CD8-positive, alpha-beta T cell (primary cell): ENCODE measurements at regions of chr11 and their contacts with region 1.

Region 1: GRCh38 chr11:59171508-59172322 is at the start of gene DTX4:
- DNase-seq: peak; percentile 78 to 92 (median 89)
- ATAC-seq: peak; percentile 86
- H3K4me3 ChIP-seq: peak within 1 kb of the TSS; percentile 72 to 85
- H3K4me3 Mint-ChIP-seq: peak within 1 kb of the TSS; percentile 87
- H3K27ac ChIP-seq: peak within 1 kb of the TSS in 1 of 2 experiments; percentile 33
- H3K27ac Mint-ChIP-seq: no peak within 1 kb of the TSS
- H3K4me1 ChIP-seq: peaks cover 9% of the 10 kb centered on the region
- H3K4me1 Mint-ChIP-seq: peaks cover 11% of the 10 kb centered on the region
- H3K27me3 ChIP-seq: peaks cover 0 to 5% of the 10 kb centered on the region in 2 experiments
- H3K27me3 Mint-ChIP-seq: peaks cover 6% of the 10 kb centered on the region
- CTCF ChIP-seq: peak; percentile 95
- total RNA-seq, gene DTX4: 0.68 to 0.97 TPM

Region 2: DNA sequence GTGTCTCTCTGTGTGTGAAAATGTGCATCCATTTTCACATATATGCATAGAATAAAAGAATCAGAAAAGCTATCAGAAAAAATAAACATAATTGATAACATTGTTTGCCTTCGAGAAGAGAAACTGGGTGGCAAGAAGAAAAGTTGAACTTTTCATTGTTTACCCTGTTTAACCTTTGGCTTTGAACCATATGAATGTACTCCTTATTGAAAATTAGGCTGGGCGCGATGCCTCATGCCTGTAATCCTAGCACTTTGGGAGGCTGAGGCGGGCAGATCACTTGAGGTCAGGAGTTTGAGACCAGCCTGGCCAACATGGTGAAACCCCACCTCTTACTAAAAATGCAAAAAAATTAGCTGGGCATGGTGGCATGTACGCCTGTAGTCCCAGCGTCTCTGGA is 1159.9 kb before region 1 on chr11:
- CTCF ChIA-PET with region 1: no interaction called
- POLR2A ChIA-PET with region 1: no interaction called
- intact Hi-C with region 1: no loop called
- DNase-seq: no peak
- ATAC-seq: no peak
- H3K4me3 ChIP-seq: no peak overlapping the region
- H3K4me3 Mint-ChIP-seq: no peak overlapping the region
- H3K27ac ChIP-seq: no peak overlapping the region
- H3K27ac Mint-ChIP-seq: no peak overlapping the region
- H3K4me1 ChIP-seq: no peaks in the 10 kb centered on the region
- H3K4me1 Mint-ChIP-seq: no peaks in the 10 kb centered on the region
- H3K27me3 ChIP-seq: no peaks in the 10 kb centered on the region
- H3K27me3 Mint-ChIP-seq: peaks cover 10% of the 10 kb centered on the region
- CTCF ChIP-seq: no peak

Region 3: GRCh38 chr11:59076876-59077571 is 94.7 kb before region 1 on chr11:
- CTCF ChIA-PET with region 1: no interaction called
- POLR2A ChIA-PET with region 1: no interaction called
- intact Hi-C with region 1: no loop called
- DNase-seq: no peak
- ATAC-seq: no peak
- H3K4me3 ChIP-seq: no peak overlapping the region
- H3K4me3 Mint-ChIP-seq: no peak overlapping the region
- H3K27ac ChIP-seq: no peak overlapping the region
- H3K27ac Mint-ChIP-seq: no peak overlapping the region
- H3K4me1 ChIP-seq: peaks cover 4% of the 10 kb centered on the region
- H3K4me1 Mint-ChIP-seq: peaks cover 8% of the 10 kb centered on the region
- H3K27me3 ChIP-seq: peaks cover 0 to 2% of the 10 kb centered on the region in 2 experiments
- H3K27me3 Mint-ChIP-seq: peaks cover 23% of the 10 kb centered on the region
- CTCF ChIP-seq: no peak

Region 4: DNA sequence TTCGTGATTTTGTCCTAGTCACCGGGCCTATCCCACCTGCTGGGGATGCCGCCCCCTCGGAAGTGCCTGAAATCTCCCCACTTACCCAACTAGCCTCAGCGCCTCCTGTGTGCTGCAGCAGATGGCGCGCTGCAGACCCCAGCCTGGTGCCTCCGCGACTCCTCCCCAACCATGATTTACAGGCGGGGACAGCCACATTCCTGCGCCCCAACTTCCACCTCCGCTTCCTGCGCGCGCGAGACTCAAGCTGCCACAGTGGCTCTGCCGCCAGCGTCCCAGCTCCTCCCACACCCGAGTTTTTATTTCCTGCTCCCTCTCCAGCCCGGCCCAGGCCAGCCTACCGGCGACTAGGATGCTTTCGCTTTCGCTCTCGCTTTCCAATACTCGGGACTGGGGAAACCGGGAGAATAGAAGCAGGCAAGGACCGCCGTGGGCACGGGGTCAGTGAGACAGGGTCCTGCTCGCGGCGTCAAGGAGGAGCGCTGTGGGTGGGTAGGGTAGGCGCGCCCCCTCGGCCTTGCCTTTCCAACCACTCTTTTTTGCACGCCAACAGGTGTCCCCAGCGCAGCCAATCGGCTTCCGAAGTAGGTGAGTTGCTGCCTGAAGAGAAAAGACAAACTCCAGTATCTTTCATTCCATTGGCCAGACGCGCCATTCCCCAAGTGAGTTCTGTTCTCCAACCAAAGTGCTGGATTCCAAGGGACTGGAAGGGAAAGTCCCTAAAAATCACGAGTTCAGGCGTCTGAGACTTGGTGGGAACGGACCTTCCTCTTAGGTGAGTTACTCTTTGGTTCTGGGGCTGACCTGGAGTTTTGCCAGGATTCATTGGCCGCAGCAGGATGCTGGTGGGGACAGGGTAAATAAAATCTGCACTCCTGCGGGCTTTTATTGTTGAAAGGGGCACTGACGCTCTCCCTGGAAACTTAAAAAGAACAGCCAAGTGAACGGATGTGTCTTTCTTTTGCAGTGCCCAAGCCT is 28.9 kb before region 1 on chr11 and contains the start of gene FAM111A:
- CTCF ChIA-PET with region 1: interaction called, 13 read pairs
- POLR2A ChIA-PET with region 1: interaction called, 4 read pairs
- intact Hi-C with region 1: loop called (anchors 1 to 2 kb)
- DNase-seq: peak; percentile 58 to 95 (median 87)
- ATAC-seq: peak; percentile 83
- H3K4me3 ChIP-seq: peak within 1 kb of the TSS; percentile 84 to 95
- H3K4me3 Mint-ChIP-seq: peak within 1 kb of the TSS; percentile 98
- H3K27ac ChIP-seq: peak within 1 kb of the TSS; percentile 81 to 95
- H3K27ac Mint-ChIP-seq: peak within 1 kb of the TSS; percentile 97
- H3K4me1 ChIP-seq: peaks cover 31% of the 10 kb centered on the region
- H3K4me1 Mint-ChIP-seq: peaks cover 54% of the 10 kb centered on the region
- H3K27me3 ChIP-seq: no peaks in the 10 kb centered on the region
- H3K27me3 Mint-ChIP-seq: no peaks in the 10 kb centered on the region
- CTCF ChIP-seq: peak; percentile 45
- total RNA-seq, gene FAM111A: 23.3 to 33.4 TPM

Region 5: GRCh38 chr11:59191890-59192289 is 20.2 kb after region 1 on chr11:
- CTCF ChIA-PET with region 1: interaction called, 102 read pairs
- POLR2A ChIA-PET with region 1: interaction called, 4 read pairs
- intact Hi-C with region 1: no loop called
- DNase-seq: no peak
- ATAC-seq: no peak
- H3K4me3 ChIP-seq: no peak overlapping the region
- H3K4me3 Mint-ChIP-seq: no peak overlapping the region
- H3K27ac ChIP-seq: no peak overlapping the region
- H3K27ac Mint-ChIP-seq: no peak overlapping the region
- H3K4me1 ChIP-seq: no peaks in the 10 kb centered on the region
- H3K4me1 Mint-ChIP-seq: peaks cover 2% of the 10 kb centered on the region
- H3K27me3 ChIP-seq: no peaks in the 10 kb centered on the region
- H3K27me3 Mint-ChIP-seq: peaks cover 3% of the 10 kb centered on the region
- CTCF ChIP-seq: no peak

Region 6: DNA sequence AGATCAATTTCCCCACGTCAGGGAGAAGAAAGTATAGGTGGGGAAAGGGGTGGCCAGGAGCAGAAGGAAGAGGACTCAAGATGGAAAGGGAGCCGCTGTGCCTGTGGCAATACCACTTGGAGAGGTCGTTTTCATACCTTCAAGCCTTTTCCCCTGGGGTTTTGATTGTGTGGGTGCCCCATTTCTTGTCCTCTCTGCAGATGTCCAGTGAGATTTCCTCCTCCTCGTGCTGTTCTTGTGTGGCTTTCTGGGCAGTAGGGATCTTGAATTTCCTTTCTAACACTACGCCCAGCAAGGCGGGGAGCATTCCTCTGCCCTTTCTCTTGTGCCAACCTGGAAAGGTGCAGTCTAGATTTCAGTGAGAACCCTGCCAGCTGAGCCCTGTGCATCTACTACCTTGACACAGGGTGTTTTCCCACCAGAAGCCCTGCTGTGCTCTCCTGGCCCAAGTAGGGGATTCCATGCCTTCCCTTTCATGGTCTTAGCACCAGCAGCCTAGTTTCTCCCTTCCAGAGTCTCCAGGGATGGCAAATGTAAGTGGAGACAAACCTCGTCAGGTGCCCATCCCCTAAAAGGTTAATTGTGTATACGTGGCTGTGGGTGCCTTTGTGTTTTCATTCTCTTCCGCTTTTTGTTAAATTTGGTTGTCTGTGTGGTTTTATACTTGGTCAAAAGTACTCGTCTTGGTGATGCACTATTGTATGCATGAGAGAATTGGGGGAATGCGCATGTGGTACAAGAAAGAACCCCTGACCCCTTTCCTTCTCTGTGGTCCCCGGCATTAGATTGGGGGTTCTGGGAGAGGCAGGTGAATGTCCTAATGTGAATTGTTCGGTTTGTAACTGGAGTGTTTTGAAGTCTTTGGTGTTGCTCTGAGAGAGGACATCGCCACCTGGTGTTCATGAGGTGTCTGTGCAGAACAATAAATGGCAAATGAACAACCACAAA is 112.4 kb after region 1 on chr11:
- CTCF ChIA-PET with region 1: interaction called, 5 read pairs
- POLR2A ChIA-PET with region 1: no interaction called
- intact Hi-C with region 1: loop called (anchors 1 kb)
- DNase-seq: peak in 8 of 9 experiments; percentile 26 to 78 (median 42)
- ATAC-seq: peak; percentile 87
- H3K4me3 ChIP-seq: no peak overlapping the region
- H3K4me3 Mint-ChIP-seq: peak overlapping the region; percentile 75
- H3K27ac ChIP-seq: no peak overlapping the region
- H3K27ac Mint-ChIP-seq: peak overlapping the region; percentile 15
- H3K4me1 ChIP-seq: peaks cover 14% of the 10 kb centered on the region
- H3K4me1 Mint-ChIP-seq: peaks cover 17% of the 10 kb centered on the region
- H3K27me3 ChIP-seq: no peaks in the 10 kb centered on the region
- H3K27me3 Mint-ChIP-seq: peaks cover 8% of the 10 kb centered on the region
- CTCF ChIP-seq: peak; percentile 65

Region 7: GRCh38 chr11:59680287-59681154 is 508.8 kb after region 1 on chr11:
- CTCF ChIA-PET with region 1: interaction called, 3 read pairs
- POLR2A ChIA-PET with region 1: no interaction called
- intact Hi-C with region 1: loop called in 1 of 2 experiments (anchors 2 kb)
- DNase-seq: peak; percentile 23 to 75 (median 54)
- ATAC-seq: peak; percentile 91
- H3K4me3 ChIP-seq: no peak overlapping the region
- H3K4me3 Mint-ChIP-seq: no peak overlapping the region
- H3K27ac ChIP-seq: no peak overlapping the region
- H3K27ac Mint-ChIP-seq: no peak overlapping the region
- H3K4me1 ChIP-seq: no peaks in the 10 kb centered on the region
- H3K4me1 Mint-ChIP-seq: no peaks in the 10 kb centered on the region
- H3K27me3 ChIP-seq: no peaks in the 10 kb centered on the region
- H3K27me3 Mint-ChIP-seq: peaks cover 19% of the 10 kb centered on the region
- CTCF ChIP-seq: peak; percentile 41